Activated CD4-positive, alpha-beta T cell treated with anti-CD3 and anti-CD28 coated beads, Interleukin-2, amount 10 ng/mL, durations not matched to agents 24 days and 14 days (primary cell): ENCODE measurements at regions of chr4 and their contacts with region 1.

Region 1: GRCh38 chr4:88823058-88823919 is 125.7 kb upstream of the NAP1L5 start:
- DNase-seq: peak; percentile 93
- H3K4me3 Mint-ChIP-seq: peak overlapping the region; percentile 88
- H3K27ac Mint-ChIP-seq: peak overlapping the region; percentile 98
- H3K4me1 Mint-ChIP-seq: peaks cover 38% of the 10 kb centered on the region
- H3K27me3 Mint-ChIP-seq: peaks cover under 1% of the 10 kb centered on the region

Region 2: GRCh38 chr4:88533937-88534750 is 289.1 kb before region 1 on chr4:
- intact Hi-C with region 1: loop called (anchors 2 kb)
- DNase-seq: no peak
- H3K4me3 Mint-ChIP-seq: no peak overlapping the region
- H3K27ac Mint-ChIP-seq: no peak overlapping the region
- H3K4me1 Mint-ChIP-seq: peaks cover 6% of the 10 kb centered on the region
- H3K27me3 Mint-ChIP-seq: no peaks in the 10 kb centered on the region

Region 3: DNA sequence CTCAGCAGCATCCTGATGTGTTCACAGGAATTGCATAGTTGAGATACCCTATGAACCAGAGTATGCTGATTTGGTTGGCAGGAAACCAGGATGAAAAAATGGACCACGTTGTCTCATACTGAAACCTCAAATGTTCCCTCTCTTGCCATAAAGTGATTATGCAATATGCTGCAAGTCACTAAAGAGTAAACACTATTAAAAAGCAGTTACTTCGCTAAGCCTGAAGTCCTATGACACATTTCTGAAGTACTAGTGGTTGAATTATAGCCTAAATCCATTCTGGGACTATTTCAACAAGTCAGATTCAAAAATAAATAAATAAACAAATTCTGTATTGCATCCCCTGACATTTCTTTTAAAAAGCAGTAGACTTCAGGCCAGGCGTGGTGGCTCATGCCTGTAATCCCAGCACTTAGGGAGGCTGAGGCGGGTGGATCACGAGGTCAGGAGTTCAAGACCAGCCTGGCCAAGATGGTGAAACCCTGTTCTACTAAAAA is 19.6 kb before region 1 on chr4:
- intact Hi-C with region 1: loop called (anchors 1 kb)
- DNase-seq: peak; percentile 67
- H3K4me3 Mint-ChIP-seq: no peak overlapping the region
- H3K27ac Mint-ChIP-seq: no peak overlapping the region
- H3K4me1 Mint-ChIP-seq: peaks cover 17% of the 10 kb centered on the region
- H3K27me3 Mint-ChIP-seq: peaks cover 21% of the 10 kb centered on the region

Region 4: GRCh38 chr4:88841635-88842034 is 18.3 kb after region 1 on chr4:
- intact Hi-C with region 1: no loop called
- DNase-seq: no peak
- H3K4me3 Mint-ChIP-seq: no peak overlapping the region
- H3K27ac Mint-ChIP-seq: no peak overlapping the region
- H3K4me1 Mint-ChIP-seq: no peaks in the 10 kb centered on the region
- H3K27me3 Mint-ChIP-seq: peaks cover 22% of the 10 kb centered on the region

Region 5: DNA sequence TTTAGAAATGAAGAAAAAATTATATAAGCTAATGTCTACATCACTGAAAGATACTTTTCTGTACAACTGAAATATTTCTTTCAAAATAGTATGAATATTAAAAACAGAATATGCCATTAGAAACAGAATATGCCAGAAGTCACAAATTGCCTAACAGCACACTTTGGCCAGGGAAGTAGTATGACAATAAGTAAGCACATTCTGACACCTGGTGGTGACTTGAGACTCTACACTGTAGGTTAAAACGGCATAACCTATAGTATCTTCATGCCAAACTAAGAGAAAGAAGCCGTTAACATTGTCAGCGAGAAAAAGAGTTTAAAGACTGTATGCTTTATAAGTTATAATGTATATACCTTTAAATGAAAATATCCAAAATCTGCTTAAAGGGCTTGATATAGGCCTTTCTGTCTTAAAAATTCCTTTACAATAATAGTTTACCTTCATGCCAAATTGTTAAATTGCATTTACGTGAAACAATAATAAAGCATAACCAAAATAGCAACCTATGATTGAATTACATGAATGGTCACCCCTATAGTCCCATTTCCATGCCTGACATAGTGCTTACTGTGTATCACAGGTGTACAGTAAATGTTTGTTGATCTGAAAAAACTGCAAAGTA is 200.9 kb after region 1 on chr4:
- intact Hi-C with region 1: loop called (anchors 1 kb)
- DNase-seq: peak; percentile 89
- H3K4me3 Mint-ChIP-seq: no peak overlapping the region
- H3K27ac Mint-ChIP-seq: no peak overlapping the region
- H3K4me1 Mint-ChIP-seq: peaks cover 2% of the 10 kb centered on the region
- H3K27me3 Mint-ChIP-seq: no peaks in the 10 kb centered on the region

Region 6: DNA sequence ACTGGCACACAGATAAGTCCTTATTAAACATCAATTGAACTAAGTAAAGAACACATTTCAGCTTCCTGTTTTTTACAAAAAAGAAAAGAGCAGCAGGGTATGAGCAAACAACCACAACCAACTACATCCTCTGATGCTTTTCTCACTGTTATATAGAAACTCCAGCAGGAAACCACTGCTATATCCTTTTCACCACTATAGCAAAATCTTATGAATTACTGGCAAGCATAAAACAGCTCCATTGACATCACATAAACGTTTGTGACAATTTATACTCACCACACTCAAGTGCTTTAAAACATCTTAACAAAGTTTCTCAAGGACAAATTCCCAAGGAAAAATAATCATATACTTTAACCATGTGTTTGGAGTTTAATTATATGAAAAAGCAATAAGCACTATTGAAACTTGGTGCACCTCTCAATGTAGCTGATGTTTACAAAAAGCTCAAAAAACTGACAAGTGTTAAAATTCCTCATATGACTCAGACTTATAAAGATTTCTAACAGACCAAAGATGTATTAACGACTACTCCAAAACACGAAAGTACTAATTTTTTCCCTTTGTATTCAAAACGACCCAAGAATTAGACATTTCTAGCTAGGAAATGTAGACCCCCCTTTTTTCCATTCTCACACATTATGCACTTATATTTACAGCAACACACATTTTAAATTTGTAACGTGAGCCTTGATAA is 471.4 kb after region 1 on chr4:
- intact Hi-C with region 1: loop called (anchors 5 kb)
- DNase-seq: peak; percentile 81
- H3K4me3 Mint-ChIP-seq: peak overlapping the region; percentile 68
- H3K27ac Mint-ChIP-seq: peak overlapping the region; percentile 98
- H3K4me1 Mint-ChIP-seq: peaks cover 76% of the 10 kb centered on the region
- H3K27me3 Mint-ChIP-seq: no peaks in the 10 kb centered on the region